ENCODE measurements at regions of chr12 and their contacts with region 1.

Region 1: GRCh38 chr12:83141460-83141994 is 454.8 kb downstream of the TMTC2 start:
- DNase-seq: no peak
- ATAC-seq: peak; percentile 94
- H3K4me3 Mint-ChIP-seq: no peak overlapping the region
- H3K27ac Mint-ChIP-seq: no peak overlapping the region
- H3K4me1 Mint-ChIP-seq: peaks cover 2% of the 10 kb centered on the region
- H3K27me3 Mint-ChIP-seq: no peaks in the 10 kb centered on the region

Region 2: GRCh38 chr12:83123039-83123438 is 18.5 kb before region 1 on chr12:
- CTCF ChIA-PET with region 1: interaction called, 3 read pairs
- POLR2A ChIA-PET with region 1: no interaction called
- intact Hi-C with region 1: loop called in 1 of 2 experiments (anchors 1 kb)
- DNase-seq: peak; percentile 8
- ATAC-seq: peak; percentile 72
- H3K4me3 Mint-ChIP-seq: no peak overlapping the region
- H3K27ac Mint-ChIP-seq: no peak overlapping the region
- H3K4me1 Mint-ChIP-seq: peaks cover 5% of the 10 kb centered on the region
- H3K27me3 Mint-ChIP-seq: no peaks in the 10 kb centered on the region

Region 3: DNA sequence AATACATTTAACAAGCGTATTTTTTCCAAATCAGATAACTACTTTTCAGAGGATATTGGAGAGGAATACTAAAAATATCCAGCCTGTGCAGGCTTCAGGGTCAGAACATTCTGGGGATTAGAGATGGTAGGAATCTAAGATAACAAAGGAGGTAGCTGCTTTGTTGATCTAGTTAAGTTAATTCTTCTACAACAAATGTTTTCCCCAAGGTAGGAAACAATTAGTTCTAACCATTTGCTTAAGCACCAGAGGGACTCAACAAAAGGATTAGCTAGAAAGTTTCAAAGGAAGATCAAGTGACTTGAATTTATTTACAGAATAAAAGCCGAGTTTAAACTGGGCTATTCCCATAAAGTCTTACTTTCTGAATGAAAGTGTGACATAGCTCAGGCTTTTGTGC is 69.4 kb after region 1 on chr12:
- CTCF ChIA-PET with region 1: no interaction called
- POLR2A ChIA-PET with region 1: no interaction called
- intact Hi-C with region 1: no loop called
- DNase-seq: no peak
- ATAC-seq: no peak
- H3K4me3 Mint-ChIP-seq: no peak overlapping the region
- H3K27ac Mint-ChIP-seq: no peak overlapping the region
- H3K4me1 Mint-ChIP-seq: no peaks in the 10 kb centered on the region
- H3K27me3 Mint-ChIP-seq: no peaks in the 10 kb centered on the region

Measured in activated CD4-positive, alpha-beta T cell treated with anti-CD3 and anti-CD28 coated beads for 36 hours (primary cell).